Right cardiac atrium (tissue), 5 donors: ENCODE measurements at regions of chr2 and their contacts with region 1.

Region 1: DNA sequence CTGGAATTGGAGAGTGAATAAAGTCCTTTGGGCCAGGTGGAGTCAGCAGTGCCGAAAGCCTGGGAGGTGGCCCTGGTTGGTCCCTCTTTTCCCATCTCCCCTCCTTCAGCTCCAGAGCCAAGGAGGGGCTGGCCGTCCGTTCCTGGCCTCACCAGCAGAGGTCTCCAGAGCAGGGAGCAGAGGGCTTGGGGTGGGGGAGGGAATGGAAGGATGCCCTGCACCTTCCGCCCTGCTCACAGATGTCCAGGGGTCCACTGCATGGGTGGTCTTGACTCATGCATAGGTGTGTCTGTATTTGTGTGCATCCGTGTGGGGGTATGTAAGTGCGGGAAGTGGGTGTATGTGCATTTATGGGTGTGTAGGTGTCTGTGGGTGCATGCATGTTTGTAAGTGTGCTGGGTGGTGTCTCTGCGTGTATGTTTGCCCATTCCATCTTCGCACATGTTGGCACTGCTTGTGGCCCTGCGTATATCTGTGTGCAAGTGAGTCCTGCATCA is 201.8 kb downstream of the ZFP36L2 start:
- DNase-seq: peak; percentile 67 to 91 (median 86)
- ATAC-seq: peak; percentile 73 to 74
- H3K4me3 ChIP-seq: no peak overlapping the region
- H3K27ac ChIP-seq: no peak overlapping the region
- H3K4me1 ChIP-seq: peaks cover 6% of the 10 kb centered on the region
- H3K27me3 ChIP-seq: no peaks in the 10 kb centered on the region

Region 2: DNA sequence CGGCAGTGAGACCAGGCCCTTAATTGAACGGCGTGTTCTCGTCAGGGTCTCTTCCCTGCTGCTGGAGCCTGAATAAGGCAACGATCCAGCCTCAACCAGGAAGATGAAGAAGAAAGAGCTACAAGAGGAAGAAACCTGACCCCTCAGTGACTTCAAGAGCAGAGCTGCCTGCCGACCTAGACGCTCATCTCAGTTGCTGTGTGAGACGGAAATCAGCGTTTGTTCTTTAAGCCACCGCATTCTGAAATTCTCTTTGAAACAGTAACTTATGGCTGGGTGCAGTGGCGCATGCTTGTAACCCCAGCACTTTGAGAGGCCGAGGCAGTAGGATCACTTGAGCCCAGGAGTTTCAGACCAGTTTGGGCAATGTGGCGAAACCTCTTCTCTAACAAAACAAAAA is 501.2 kb before region 1 on chr2:
- intact Hi-C with region 1: no loop called
- DNase-seq: no peak
- ATAC-seq: no peak
- H3K4me3 ChIP-seq: no peak overlapping the region
- H3K27ac ChIP-seq: no peak overlapping the region
- H3K4me1 ChIP-seq: no peaks in the 10 kb centered on the region
- H3K27me3 ChIP-seq: no peaks in the 10 kb centered on the region

Region 3: GRCh38 chr2:42974721-42975717 is 49.5 kb before region 1 on chr2:
- intact Hi-C with region 1: loop called in 2 of 4 experiments (anchors 5 to 10 kb)
- DNase-seq: peak; percentile 81 to 94 (median 93)
- ATAC-seq: peak; percentile 87
- H3K4me3 ChIP-seq: peak overlapping the region; percentile 33
- H3K27ac ChIP-seq: no peak overlapping the region
- H3K4me1 ChIP-seq: no peaks in the 10 kb centered on the region
- H3K27me3 ChIP-seq: no peaks in the 10 kb centered on the region

Region 4: DNA sequence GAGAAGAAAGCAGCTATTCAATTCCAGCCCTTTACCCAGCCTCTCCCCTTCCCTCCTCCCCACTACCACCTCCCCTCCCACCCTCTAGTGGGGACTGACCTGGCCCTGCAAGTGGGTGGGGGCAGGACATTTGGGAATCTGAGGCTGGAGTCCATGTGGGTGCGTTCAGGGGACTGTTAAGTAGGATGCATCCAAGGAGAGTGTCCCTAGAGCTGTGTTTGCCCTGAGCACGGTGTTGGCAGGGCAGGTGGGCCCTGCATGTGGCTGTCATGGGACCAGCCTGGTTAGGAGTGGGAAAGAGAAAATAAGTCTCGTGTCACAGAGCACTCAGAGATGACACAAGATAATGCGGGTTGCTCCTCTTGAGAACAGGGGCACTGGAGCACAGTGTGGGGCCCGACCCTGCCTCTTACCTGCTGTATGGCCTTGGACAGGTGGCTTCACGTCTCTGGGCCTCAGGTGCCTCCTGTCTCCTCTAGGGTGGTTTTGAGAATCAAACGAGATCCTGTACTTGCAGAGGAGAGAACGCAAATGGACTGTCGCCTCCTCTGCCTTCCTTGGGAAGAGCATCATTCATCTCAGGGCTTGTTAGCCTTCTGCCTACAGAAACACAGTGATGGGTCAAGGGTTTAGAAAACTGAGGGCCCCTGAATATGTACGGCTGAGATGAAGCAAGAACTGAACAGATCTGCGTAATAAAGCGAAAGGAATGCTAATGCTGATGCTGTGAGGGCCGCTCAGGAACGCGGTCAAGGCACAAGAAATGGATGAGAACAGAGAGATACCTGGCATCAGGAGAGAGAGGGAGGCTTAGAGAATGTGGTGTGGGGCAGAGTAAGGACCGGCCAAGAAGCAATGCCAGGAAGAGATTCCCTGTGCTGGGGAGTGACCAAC is 44.4 kb before region 1 on chr2:
- intact Hi-C with region 1: loop called in 2 of 4 experiments (anchors 5 to 10 kb)
- DNase-seq: no peak
- ATAC-seq: no peak
- H3K4me3 ChIP-seq: no peak overlapping the region
- H3K27ac ChIP-seq: no peak overlapping the region
- H3K4me1 ChIP-seq: peaks cover 2% of the 10 kb centered on the region
- H3K27me3 ChIP-seq: no peaks in the 10 kb centered on the region

Region 5: GRCh38 chr2:43086451-43087221 is 62.1 kb after region 1 on chr2:
- intact Hi-C with region 1: loop called in 1 of 4 experiments (anchors 10 kb)
- DNase-seq: peak; percentile 79 to 85 (median 79)
- ATAC-seq: peak; percentile 86 to 93
- H3K4me3 ChIP-seq: no peak overlapping the region
- H3K27ac ChIP-seq: peak overlapping the region; percentile 91
- H3K4me1 ChIP-seq: peaks cover 38% of the 10 kb centered on the region
- H3K27me3 ChIP-seq: no peaks in the 10 kb centered on the region

Region 6: GRCh38 chr2:43105586-43106558 is 81.3 kb after region 1 on chr2:
- intact Hi-C with region 1: no loop called
- DNase-seq: peak; percentile 78 to 89 (median 87)
- ATAC-seq: peak; percentile 59 to 64
- H3K4me3 ChIP-seq: no peak overlapping the region
- H3K27ac ChIP-seq: peak overlapping the region; percentile 87
- H3K4me1 ChIP-seq: peaks cover 25% of the 10 kb centered on the region
- H3K27me3 ChIP-seq: no peaks in the 10 kb centered on the region

Region 7: DNA sequence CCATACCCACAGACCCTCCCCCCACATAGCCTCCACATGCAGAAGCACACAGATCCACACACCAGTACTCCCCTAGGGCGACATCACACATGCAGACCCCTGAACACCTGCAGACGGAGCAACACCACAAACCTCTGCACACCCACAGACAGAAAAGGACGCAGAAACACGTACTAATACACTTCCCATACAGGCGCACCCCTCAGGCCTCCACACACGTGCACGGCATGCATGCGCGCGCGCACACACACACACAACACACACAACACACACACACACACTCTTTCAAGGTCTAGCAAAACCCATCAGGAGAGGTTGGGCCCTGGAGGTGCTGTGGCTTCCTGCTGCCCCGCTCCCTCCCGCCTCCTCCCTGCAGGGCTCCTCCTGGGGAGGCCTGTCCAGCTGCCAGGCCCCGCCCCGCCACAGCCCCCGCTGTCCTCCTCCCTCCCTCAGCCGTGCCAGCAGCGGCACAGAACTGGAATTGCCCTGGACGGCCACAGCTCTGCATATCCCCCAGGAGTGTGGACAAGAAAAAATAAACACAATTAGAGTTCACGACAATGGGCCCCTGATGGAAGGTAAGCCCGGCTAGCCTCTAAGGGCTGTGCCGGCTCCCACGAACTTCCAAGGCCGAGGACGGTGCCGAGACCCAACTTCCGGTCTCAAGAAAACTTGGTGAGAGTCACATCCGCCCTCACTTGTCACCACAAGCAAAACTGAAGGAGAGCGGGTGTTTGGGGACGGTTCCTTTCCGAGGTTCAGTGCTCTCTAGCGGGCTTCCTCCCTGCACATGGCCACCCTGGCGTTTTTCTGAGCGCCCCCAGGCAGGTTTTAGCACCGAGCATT is 195.0 kb after region 1 on chr2:
- intact Hi-C with region 1: loop called in 1 of 4 experiments (anchors 5 kb)
- DNase-seq: peak; percentile 89 to 97 (median 96)
- ATAC-seq: peak; percentile 84 to 85
- H3K4me3 ChIP-seq: peak overlapping the region; percentile 47
- H3K27ac ChIP-seq: peak overlapping the region; percentile 100
- H3K4me1 ChIP-seq: peaks cover 17% of the 10 kb centered on the region
- H3K27me3 ChIP-seq: no peaks in the 10 kb centered on the region